Left ventricle myocardium inferior (tissue), 1 donor: ENCODE measurements at regions of chr10 and their contacts with region 1.

Region 1: GRCh38 chr10:123994417-123995081 is 98.8 kb downstream of the CHST15 start:
- DNase-seq: peak; percentile 84
- H3K4me3 ChIP-seq: peak overlapping the region; percentile 39
- H3K27ac ChIP-seq: no peak overlapping the region
- H3K4me1 ChIP-seq: peaks cover 18% of the 10 kb centered on the region
- H3K27me3 ChIP-seq: peaks cover 67% of the 10 kb centered on the region
- CTCF ChIP-seq: peak; percentile 99

Region 2: DNA sequence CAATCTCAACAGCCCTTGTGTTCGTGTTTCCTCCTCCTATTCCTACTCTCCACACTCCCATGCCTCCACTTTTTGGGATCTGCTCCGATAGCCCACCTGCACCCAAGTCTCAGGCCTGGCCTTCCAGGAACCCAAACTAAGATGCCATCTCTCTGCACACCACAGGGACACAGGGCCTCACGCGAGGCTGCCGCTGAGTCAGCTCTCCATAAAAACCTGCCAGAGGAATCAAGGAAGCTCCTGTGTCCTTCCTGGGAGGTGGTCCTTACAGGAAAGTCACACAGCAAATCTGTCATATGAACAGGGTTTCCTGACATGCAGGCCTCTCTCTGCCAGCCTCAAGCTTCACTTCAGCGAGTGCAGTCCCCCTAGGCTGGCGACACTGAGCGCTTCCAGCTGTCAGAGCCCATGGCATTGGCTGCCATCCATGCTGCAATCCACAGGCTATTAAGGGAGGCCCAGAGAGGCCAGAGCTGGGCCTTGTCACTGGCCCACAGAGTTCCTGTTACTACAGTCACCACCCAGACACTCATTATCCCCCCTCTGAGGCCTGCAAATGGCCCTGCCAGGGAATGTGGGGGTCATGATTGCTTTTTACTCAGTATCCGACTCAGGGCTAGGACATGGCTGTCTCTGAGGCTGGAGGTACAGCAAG is 272.8 kb after region 1 on chr10:
- intact Hi-C with region 1: loop called (anchors 10 kb)
- DNase-seq: peak; percentile 41
- H3K4me3 ChIP-seq: no peak overlapping the region
- H3K27ac ChIP-seq: no peak overlapping the region
- H3K4me1 ChIP-seq: no peaks in the 10 kb centered on the region
- H3K27me3 ChIP-seq: no peaks in the 10 kb centered on the region
- CTCF ChIP-seq: no peak

Region 3: GRCh38 chr10:124388823-124389612 is 394.5 kb after region 1 on chr10:
- intact Hi-C with region 1: loop called (anchors 1 kb)
- DNase-seq: peak; percentile 90
- H3K4me3 ChIP-seq: peak overlapping the region; percentile 71
- H3K27ac ChIP-seq: no peak overlapping the region
- H3K4me1 ChIP-seq: peaks cover 10% of the 10 kb centered on the region
- H3K27me3 ChIP-seq: peaks cover 8% of the 10 kb centered on the region
- CTCF ChIP-seq: peak; percentile 97